AG04450 (cell line): ENCODE measurements at regions of chr7 and their contacts with region 1.

Region 1: DNA sequence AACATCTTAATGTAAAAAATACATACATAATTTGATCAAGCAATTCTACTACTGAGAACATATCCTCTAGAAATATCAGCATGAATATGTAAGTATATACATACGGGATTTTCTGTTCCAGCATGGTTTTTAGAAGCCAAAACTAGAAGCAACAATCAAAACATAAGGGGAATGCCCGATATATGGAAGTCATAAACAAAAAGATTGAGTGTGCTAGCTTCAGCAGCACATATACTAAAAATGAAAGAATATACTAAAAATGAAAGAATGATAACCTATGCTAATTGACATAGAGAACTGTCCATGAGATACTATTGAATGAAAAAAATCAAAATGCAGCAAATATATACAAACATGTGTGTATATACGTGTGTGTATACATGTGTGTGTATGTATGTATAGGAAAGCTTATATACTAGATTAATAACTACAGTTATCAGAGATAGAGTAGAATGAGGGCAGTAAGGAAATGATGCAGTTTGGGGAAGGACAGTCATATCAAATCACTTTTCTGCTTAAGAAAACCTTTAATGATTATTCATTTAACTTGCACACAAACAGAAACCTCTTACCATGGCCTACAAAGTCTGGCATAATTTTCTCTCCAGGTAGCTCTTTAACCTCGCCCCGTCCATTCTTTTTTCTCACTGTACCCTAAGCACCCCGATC is 72.9 kb downstream of the NPY start:
- DNase-seq: no peak
- H3K4me3 ChIP-seq: no peak overlapping the region
- H3K27ac ChIP-seq: no peak overlapping the region
- H3K27me3 ChIP-seq: peaks cover 3% of the 10 kb centered on the region
- CTCF ChIP-seq: no peak

Region 2: GRCh38 chr7:24560772-24561171 is 203.9 kb after region 1 on chr7:
- CTCF ChIA-PET with region 1: interaction called, 11 read pairs
- POLR2A ChIA-PET with region 1: no interaction called
- DNase-seq: no peak
- H3K4me3 ChIP-seq: no peak overlapping the region
- H3K27ac ChIP-seq: no peak overlapping the region
- H3K27me3 ChIP-seq: peaks cover 4% of the 10 kb centered on the region
- CTCF ChIP-seq: no peak